Posterior vena cava (tissue), 2 donors: ENCODE measurements at regions of chr12 and their contacts with region 1.

Region 1: DNA sequence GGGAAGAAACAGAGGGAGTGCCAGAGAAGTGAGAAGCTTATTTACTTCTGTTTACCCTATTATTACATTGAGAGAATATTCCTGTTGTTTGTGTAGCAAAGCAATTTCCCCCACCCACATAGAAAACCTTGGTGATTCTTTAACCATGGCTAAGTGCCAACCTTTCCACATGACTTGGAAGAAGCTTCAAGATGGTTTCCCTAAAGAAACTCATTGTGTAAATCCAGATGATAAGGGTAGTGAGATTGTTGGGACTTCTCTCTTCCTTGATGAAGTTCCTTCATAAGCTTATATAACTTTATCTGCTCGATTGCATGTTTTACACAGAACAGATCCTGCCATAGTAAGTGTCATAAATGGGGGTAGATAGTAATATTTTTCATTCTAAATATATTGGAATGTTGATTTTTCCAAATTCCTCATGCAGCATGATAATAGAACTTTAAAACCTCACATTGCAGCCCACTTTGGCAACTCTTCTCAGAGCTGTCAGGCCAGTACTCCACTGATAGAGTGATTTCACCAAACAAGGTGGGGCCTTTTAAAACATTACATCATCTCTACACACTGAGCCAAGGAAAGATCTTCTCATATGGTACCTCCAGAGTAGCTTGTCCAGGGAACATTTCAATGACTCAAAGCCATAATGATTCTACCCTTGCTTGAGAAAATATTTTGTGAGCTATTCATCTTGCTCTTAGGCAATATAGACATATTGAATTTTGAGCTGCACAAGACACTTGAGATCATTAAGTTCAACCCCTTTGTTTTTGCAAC is 47.8 kb upstream of the KIF21A start:
- DNase-seq: no peak

Region 2: GRCh38 chr12:39467432-39467870 is 23.2 kb before region 1 on chr12:
- intact Hi-C with region 1: loop called in 1 of 2 experiments (anchors 1 kb)
- DNase-seq: no peak